ENCODE measurements at regions of chr17 and their contacts with region 1.

Region 1: GRCh38 chr17:72120642-72121163 is at the start of gene SOX9:
- DNase-seq: peak; percentile 99
- ATAC-seq: peak; percentile 76
- H3K4me3 ChIP-seq: peak within 1 kb of the TSS; percentile 85
- H3K27ac ChIP-seq: peak within 1 kb of the TSS; percentile 83
- H3K4me1 ChIP-seq: peaks cover 37% of the 10 kb centered on the region
- H3K27me3 ChIP-seq: no peaks in the 10 kb centered on the region
- CTCF ChIP-seq: no peak
- total RNA-seq, gene SOX9: 119 and 151 TPM in 2 replicates

Region 2: DNA sequence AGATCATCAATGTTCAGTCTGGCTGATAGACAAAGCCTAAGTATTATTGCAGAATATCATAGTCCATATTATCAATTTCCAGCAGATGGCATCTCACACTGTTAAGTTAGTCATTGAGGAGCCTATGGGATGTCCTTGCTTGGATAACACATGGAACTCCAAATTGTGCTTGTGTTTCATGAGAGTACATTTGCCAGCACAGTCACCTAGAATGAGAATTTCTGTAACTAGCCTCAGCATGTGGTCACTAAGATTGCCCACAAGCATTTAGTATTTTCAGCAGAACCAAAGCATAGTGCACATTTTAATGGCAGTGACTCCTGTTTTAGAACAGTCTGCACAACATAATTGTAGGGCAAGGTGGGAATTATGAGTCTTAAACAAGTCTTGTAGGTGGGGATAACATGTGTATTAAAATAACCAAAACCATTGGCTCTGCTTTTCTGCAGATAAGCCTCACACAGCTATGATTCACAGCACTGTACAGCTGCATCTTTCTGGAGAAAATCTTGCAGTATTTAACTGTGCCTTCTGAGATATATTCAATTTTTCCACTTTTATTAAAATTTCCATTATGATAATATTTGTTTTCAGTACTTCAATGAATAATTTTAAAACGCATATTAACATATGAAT is 882.7 kb before region 1 on chr17:
- CTCF ChIA-PET with region 1: no interaction called
- POLR2A ChIA-PET with region 1: no interaction called
- intact Hi-C with region 1: loop called (anchors 2 kb)
- DNase-seq: peak; percentile 87
- ATAC-seq: peak; percentile 97
- H3K4me3 ChIP-seq: no peak overlapping the region
- H3K27ac ChIP-seq: peak overlapping the region; percentile 32
- H3K4me1 ChIP-seq: peaks cover 4% of the 10 kb centered on the region; the same call in 1 of the 2 replicates
- H3K27me3 ChIP-seq: no peaks in the 10 kb centered on the region
- CTCF ChIP-seq: peak; percentile 85

Region 3: GRCh38 chr17:71633391-71633849 is 487.3 kb before region 1 on chr17:
- CTCF ChIA-PET with region 1: no interaction called
- POLR2A ChIA-PET with region 1: interaction called, 4 read pairs
- intact Hi-C with region 1: loop called (anchors 1 kb)
- DNase-seq: peak; percentile 98
- ATAC-seq: peak; percentile 74
- H3K4me3 ChIP-seq: peak overlapping the region; percentile 32
- H3K27ac ChIP-seq: peak overlapping the region; percentile 62
- H3K4me1 ChIP-seq: peaks cover 41% of the 10 kb centered on the region
- H3K27me3 ChIP-seq: no peaks in the 10 kb centered on the region
- CTCF ChIP-seq: no peak

Region 4: GRCh38 chr17:71922439-71922838 is 198.3 kb before region 1 on chr17:
- CTCF ChIA-PET with region 1: no interaction called
- POLR2A ChIA-PET with region 1: interaction called, 3 read pairs
- intact Hi-C with region 1: loop called (anchors 2 kb)
- DNase-seq: peak; percentile 98
- ATAC-seq: peak; percentile 78
- H3K4me3 ChIP-seq: no peak overlapping the region
- H3K27ac ChIP-seq: peak overlapping the region; percentile 81
- H3K4me1 ChIP-seq: peaks cover 50% of the 10 kb centered on the region
- H3K27me3 ChIP-seq: no peaks in the 10 kb centered on the region
- CTCF ChIP-seq: no peak

Region 5: DNA sequence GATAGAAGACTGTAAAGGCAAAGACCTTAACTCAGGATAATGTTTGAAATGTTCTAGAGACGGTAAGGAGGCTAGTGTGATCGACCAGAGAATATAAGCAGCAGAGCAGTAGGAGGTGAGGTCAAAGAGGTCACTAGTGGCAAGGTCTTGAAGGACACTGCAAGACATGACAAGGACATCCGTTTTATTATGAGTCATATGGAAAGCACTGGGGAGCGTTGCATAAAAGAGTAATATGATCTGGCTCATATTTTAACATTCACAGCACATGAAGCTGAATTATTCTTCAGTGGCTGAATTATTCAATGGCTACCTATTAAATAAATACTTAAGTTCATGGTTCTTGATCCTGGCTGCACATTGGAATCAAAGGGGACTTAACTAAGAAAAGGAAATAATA is 123.8 kb after region 1 on chr17:
- CTCF ChIA-PET with region 1: no interaction called
- POLR2A ChIA-PET with region 1: no interaction called
- intact Hi-C with region 1: loop called (anchors 10 kb)
- DNase-seq: peak; percentile 72
- ATAC-seq: peak; percentile 90
- H3K4me3 ChIP-seq: no peak overlapping the region
- H3K27ac ChIP-seq: peak overlapping the region; percentile 45
- H3K4me1 ChIP-seq: peaks cover 14% of the 10 kb centered on the region
- H3K27me3 ChIP-seq: no peaks in the 10 kb centered on the region
- CTCF ChIP-seq: no peak

Region 6: DNA sequence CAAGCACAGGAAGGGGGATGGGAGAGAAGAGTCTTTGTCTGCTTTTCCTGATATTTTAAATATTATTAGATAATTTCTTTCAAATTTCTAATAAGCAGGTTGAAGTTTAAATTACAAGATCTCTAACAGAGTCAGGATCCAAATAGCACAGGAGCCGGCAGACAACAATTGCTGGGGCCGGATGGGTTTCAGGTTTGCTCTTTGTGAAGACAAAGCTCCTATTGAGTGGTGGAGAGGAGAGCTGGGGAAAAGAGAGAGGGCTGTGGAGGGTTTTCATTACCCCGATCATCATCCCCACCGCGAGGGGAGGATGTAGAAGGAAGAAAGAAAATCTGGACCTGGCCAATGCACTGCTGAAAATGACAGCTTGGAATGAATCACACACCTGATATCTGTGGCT is 197.4 kb after region 1 on chr17:
- CTCF ChIA-PET with region 1: no interaction called
- POLR2A ChIA-PET with region 1: no interaction called
- intact Hi-C with region 1: no loop called
- DNase-seq: no peak
- ATAC-seq: no peak
- H3K4me3 ChIP-seq: no peak overlapping the region
- H3K27ac ChIP-seq: no peak overlapping the region
- H3K4me1 ChIP-seq: no peaks in the 10 kb centered on the region
- H3K27me3 ChIP-seq: no peaks in the 10 kb centered on the region
- CTCF ChIP-seq: no peak

Region 7: DNA sequence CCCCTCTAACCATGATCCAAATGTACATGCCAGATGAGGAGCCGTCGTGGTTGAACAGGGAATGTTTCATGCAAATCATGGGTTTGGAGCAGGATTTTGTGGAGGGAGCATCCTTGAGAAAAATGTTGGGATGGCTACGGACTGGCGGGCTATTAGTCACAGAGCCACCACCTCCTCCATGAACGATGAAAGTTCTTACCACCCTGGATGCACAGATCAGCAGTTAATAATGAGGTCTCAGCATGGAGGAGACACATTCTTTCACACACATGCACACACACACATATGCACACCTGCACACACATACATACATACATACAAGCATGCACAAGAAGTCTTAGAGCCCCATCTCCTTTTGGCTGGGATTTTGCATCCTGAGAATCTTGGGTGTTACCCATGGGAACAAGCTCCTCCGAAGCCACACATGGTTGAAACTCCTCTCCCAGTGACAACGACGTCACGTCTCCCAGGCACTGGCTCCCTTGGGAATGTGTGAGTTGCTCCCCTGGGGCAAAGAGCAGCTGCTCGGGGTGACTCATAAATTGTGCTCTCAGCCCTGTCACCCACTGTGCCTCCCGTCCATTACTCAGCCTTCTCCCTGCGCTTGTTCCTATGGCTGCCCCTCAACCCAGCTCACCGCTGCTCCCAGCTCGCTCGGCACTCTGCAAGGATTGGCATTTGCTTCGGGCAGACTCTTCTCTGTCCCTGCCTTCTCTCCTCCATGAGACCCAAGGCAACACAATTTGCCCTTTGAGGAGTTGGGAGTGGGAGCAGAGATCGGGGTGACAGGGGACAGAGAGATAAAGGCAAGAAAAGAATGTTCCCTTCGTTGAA is 344.7 kb after region 1 on chr17:
- CTCF ChIA-PET with region 1: interaction called, 4 read pairs
- POLR2A ChIA-PET with region 1: interaction called, 13 read pairs
- intact Hi-C with region 1: no loop called
- DNase-seq: peak; percentile 99
- ATAC-seq: peak; percentile 89
- H3K4me3 ChIP-seq: peak overlapping the region; percentile 66
- H3K27ac ChIP-seq: peak overlapping the region; percentile 96
- H3K4me1 ChIP-seq: peaks cover 54% of the 10 kb centered on the region
- H3K27me3 ChIP-seq: no peaks in the 10 kb centered on the region
- CTCF ChIP-seq: no peak